Right cardiac atrium (tissue), 5 donors: ENCODE measurements at regions of chr1 and their contacts with region 1.

Region 1: DNA sequence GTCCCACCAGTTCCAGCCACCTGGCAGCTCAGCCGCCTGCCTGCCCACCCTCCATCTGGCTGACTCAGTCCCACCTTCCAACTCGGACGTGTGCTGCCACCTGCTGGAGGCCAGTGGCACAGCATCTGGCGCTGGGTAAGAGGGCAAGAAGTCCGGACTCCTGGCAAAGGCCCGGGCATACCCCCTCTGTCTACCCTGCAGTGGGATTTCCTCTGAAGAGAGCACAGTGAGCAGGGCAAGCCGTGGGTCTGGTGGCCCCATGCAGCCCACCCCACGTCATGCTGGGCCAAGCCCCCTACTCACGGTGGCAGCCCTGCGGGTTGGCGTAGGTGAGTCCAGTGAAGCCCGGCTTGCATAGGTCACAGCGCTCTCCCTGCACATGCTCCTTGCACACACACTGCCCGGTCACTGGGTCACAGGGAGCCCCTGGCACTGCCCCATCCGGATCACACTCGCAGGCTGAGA is 24.5 kb downstream of the LAMB3 start:
- DNase-seq: peak; percentile 72 to 93 (median 92)
- ATAC-seq: peak; percentile 58 to 67
- H3K4me3 ChIP-seq: no peak overlapping the region
- H3K27ac ChIP-seq: no peak overlapping the region
- H3K4me1 ChIP-seq: peaks cover 4% of the 10 kb centered on the region
- H3K27me3 ChIP-seq: no peaks in the 10 kb centered on the region

Region 2: GRCh38 chr1:209095627-209096595 is 531.9 kb before region 1 on chr1:
- intact Hi-C with region 1: no loop called
- DNase-seq: no peak
- ATAC-seq: no peak
- H3K4me3 ChIP-seq: no peak overlapping the region
- H3K27ac ChIP-seq: no peak overlapping the region
- H3K4me1 ChIP-seq: no peaks in the 10 kb centered on the region
- H3K27me3 ChIP-seq: no peaks in the 10 kb centered on the region

Region 3: DNA sequence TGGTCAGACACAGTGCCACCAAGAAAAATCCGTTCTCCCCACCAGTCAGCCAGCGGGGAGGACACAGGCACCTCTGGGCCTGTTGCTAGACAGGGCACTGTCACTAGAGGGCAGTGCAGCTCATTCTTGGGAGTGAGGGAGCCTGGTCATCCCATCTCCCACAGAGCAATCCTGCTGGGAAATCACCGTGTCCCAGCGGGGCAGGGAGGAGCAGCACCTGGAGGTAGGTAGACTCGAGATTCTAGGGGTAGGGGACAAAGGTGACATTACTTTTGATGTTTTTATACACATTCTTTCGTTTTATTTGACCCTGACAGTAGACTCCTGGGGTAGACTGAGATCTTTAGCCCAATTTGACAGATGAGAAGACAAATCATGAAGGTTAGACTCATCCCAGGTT is 51.0 kb before region 1 on chr1:
- intact Hi-C with region 1: loop called in 1 of 4 experiments (anchors 5 kb)
- DNase-seq: peak; percentile 80 to 91 (median 89)
- ATAC-seq: peak; percentile 88 to 95
- H3K4me3 ChIP-seq: no peak overlapping the region
- H3K27ac ChIP-seq: no peak overlapping the region
- H3K4me1 ChIP-seq: no peaks in the 10 kb centered on the region
- H3K27me3 ChIP-seq: no peaks in the 10 kb centered on the region

Region 4: GRCh38 chr1:209585672-209586071 is 42.1 kb before region 1 on chr1:
- intact Hi-C with region 1: loop called in 1 of 4 experiments (anchors 5 kb)
- DNase-seq: peak; percentile 63 to 88 (median 86)
- ATAC-seq: peak; percentile 83 to 87
- H3K4me3 ChIP-seq: no peak overlapping the region
- H3K27ac ChIP-seq: no peak overlapping the region
- H3K4me1 ChIP-seq: no peaks in the 10 kb centered on the region
- H3K27me3 ChIP-seq: no peaks in the 10 kb centered on the region

Region 5: GRCh38 chr1:209674957-209675564 is 47.3 kb after region 1 on chr1 and contains the start of gene G0S2:
- intact Hi-C with region 1: loop called in 1 of 4 experiments (anchors 10 kb)
- DNase-seq: peak; percentile 87 to 95 (median 95)
- ATAC-seq: peak; percentile 90 to 93
- H3K4me3 ChIP-seq: peak within 1 kb of the TSS; percentile 27
- H3K27ac ChIP-seq: peak within 1 kb of the TSS; percentile 65
- H3K4me1 ChIP-seq: peaks cover 8% of the 10 kb centered on the region
- H3K27me3 ChIP-seq: no peaks in the 10 kb centered on the region
- total RNA-seq, gene G0S2: 77.4 to 414 (median 243) TPM

Region 6: DNA sequence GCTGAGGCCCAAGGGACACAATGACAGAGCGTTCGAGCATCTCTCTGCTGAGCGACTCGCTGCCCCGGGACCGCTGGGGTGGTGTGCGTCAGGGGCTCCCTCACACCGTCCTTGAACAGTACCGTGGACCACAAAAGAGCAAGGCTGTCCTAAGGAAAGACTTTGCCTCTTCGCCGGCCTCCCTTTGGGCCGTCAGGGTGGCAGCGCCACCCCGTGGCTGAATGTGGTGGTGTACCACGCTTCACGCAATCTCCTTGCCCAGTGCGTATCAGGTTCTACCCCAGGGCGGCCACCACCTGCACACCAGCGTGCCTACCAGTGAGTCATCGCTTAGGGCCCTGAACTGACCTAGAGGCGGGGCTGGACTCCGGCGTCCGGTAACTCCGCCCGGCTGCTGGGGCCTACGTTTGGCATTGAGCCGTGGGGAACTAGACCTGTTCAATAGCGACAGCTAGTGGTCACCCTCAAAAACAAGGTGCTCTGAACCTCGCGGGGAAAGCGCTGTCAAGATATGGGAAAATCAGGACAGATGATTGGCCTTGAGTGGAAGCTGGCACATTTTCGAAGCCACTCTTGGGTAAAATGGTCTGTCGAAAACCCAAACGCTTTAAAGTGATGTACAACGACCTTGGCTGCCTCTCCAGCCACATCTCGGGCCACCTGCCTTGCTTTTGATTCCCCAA is 120.0 kb after region 1 on chr1:
- intact Hi-C with region 1: loop called in 1 of 4 experiments (anchors 10 kb)
- DNase-seq: peak; percentile 91 to 95 (median 95)
- ATAC-seq: peak; percentile 97 to 99
- H3K4me3 ChIP-seq: no peak overlapping the region
- H3K27ac ChIP-seq: peak overlapping the region; percentile 38
- H3K4me1 ChIP-seq: peaks cover 7% of the 10 kb centered on the region
- H3K27me3 ChIP-seq: no peaks in the 10 kb centered on the region